ENCODE measurements at regions of chr20 and their contacts with region 1.

Region 1: DNA sequence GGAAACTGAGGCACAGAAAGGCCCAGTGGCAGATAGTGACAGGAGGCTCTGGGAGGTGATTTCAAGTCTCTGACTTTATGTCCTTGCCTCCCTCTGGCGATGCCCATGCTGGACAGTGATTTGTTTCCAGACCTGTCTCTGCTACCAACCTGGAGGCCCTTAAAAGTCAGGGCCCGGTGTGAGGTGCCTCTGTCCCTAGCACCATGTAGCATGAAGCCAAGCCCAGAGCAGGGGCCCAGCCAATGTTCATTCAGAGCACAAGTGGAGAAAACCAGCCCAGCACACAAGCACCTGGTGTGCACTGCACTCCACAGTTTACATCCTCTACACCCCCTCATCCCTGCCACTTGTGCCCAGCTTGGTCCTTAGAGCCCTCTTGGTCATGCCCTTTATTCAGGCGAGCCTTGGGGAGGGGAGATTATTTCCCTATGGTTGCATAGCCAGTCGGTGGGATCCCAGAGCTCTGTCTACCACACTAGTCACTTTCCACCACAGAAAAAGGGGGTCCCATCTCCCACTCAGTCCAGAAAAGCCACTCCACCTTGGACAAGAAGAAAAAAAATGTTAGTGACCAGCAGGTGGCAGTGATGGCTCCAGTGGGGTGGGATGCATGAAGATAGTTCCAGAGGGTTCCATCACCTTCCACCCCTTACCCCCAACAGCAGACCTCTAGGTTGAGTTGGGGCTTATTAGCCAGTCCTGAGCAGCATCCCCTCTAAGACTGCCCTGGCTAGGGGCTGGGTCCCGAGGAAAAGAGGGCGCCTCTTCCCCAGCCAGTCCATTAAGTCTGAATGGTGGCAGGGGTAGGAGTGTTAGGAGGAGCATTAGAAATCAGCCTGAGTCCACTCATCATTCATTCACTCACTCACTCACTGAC is 30.9 kb downstream of the KIAA1755 start:
- DNase-seq: peak; percentile 41

Region 2: DNA sequence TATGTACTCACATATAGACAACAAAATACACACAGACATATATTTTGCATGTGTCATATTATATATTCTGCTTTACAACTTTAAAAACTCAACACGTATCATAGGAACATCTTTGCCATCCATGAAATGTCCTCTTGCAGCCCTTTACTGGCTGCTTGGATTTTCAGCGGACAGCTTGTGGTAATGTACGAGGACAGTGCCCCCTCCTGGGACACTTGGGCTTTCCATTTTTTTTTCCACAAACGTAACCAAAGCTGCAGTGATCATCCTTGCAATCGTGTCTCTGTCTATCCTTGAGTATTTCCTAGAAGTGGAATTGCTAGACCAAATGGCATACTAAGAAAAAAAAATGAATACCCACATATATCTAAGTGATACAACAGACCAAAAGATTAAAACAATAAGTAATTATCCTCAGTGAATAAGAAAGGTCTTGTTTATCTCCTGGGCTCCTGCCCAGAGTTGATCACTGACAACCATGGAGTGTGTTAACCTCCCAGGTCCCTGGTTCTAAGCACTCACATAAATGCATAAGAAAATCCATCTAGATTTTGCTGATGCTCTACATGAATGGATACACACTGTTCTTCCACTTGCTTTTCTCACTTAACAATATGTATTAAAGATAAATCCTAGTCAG is 92.5 kb after region 1 on chr20:
- intact Hi-C with region 1: loop called in 1 of 2 experiments (anchors 5 kb)
- DNase-seq: no peak

Region 3: DNA sequence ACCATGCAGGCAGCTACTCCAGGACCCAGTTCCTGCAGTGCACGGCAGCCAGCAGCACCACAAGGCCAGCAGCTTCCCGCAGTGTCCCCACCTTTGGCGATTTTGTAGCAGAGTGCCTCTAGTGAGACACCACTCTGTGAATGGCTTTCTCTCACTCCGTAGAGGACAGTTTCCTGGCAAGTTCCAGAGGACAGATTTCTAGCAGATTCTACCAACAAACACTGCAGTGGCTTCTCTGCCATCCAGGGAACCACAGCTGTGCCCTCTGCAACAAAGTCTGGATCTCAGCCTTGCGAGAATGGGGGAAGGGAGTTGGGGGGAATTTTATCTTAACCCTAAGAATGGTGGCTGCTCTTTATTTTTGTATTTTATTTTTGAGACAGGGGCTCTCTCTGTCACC is 176.9 kb after region 1 on chr20:
- intact Hi-C with region 1: loop called in 1 of 2 experiments (anchors 10 kb)
- DNase-seq: no peak

Measured in posterior vena cava (tissue), 2 donors.